Right lobe of liver (tissue), 6 donors: ENCODE measurements at regions of chr21 and their contacts with region 1.

Region 1: GRCh38 chr21:34888569-34889319 is 160.4 kb downstream of the RUNX1 start:
- DNase-seq: peak; percentile 96 to 97 (median 96)
- ATAC-seq: peak; percentile 73 to 88 (median 78)
- H3K4me3 ChIP-seq: peak overlapping the region; percentile 60 to 75 (median 72)
- H3K27ac ChIP-seq: peak overlapping the region; percentile 35 to 81 (median 73)
- H3K4me1 ChIP-seq: peaks cover 0 to 17% (median 0%) of the 10 kb centered on the region in 4 donors
- H3K27me3 ChIP-seq: peaks cover 0 to 28% of the 10 kb centered on the region in 2 donors
- CTCF ChIP-seq: peak in 1 of 4 donors; percentile 3
- POLR2A ChIP-seq: peak; percentile 99

Region 2: GRCh38 chr21:34795175-34795547 is 93.6 kb before region 1 on chr21:
- intact Hi-C with region 1: loop called in 1 of 2 experiments (anchors 5 kb)
- DNase-seq: no peak
- ATAC-seq: peak; percentile 57 to 74 (median 68)
- H3K4me3 ChIP-seq: peak overlapping the region in 1 of 3 donors; percentile 4
- H3K27ac ChIP-seq: peak overlapping the region; percentile 45 to 85 (median 75)
- H3K4me1 ChIP-seq: peaks cover 0 to 54% (median 8%) of the 10 kb centered on the region in 4 donors
- H3K27me3 ChIP-seq: no peaks in the 10 kb centered on the region
- CTCF ChIP-seq: peak in 3 of 4 donors; percentile 18 to 34 (median 27)
- POLR2A ChIP-seq: no peak

Region 3: GRCh38 chr21:34822942-34823341 is 65.8 kb before region 1 on chr21:
- intact Hi-C with region 1: no loop called
- DNase-seq: no peak
- ATAC-seq: no peak
- H3K4me3 ChIP-seq: no peak overlapping the region
- H3K27ac ChIP-seq: no peak overlapping the region
- H3K4me1 ChIP-seq: peaks cover 0 to 10% (median 0%) of the 10 kb centered on the region in 4 donors
- H3K27me3 ChIP-seq: no peaks in the 10 kb centered on the region
- CTCF ChIP-seq: no peak
- POLR2A ChIP-seq: no peak